ENCODE measurements at regions of chr4 and their contacts with region 1.

Region 1: DNA sequence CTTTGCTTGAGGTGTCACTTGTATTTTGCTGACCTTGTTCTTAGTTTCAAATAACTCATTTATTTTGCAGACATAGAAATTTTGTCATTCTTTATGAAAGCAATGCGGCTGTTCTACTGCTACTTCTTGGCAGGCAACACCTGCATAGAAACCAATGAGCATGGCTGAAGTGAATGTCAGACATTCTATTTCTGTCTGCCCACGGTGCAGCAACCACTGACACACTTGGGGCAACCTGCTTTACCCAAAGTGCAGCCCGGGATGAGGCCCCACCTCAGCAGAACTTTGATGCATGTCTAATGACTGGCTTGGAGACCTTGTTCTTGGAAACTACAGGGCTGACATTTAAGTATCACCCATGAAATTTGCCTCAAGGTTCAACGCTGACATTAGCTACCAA is 93.6 kb downstream of the RBM47 start:
- DNase-seq: no peak
- H3K4me3 ChIP-seq: no peak overlapping the region
- H3K27ac ChIP-seq: no peak overlapping the region
- H3K4me1 ChIP-seq: peaks cover 4% of the 10 kb centered on the region; the same call in 1 of the 2 replicates
- H3K27me3 ChIP-seq: no peaks in the 10 kb centered on the region
- CTCF ChIP-seq: no peak

Region 2: GRCh38 chr4:41339812-41340809 is 804.1 kb after region 1 on chr4:
- CTCF ChIA-PET with region 1: interaction called, 26 read pairs
- POLR2A ChIA-PET with region 1: no interaction called
- intact Hi-C with region 1: no loop called
- DNase-seq: no peak
- H3K4me3 ChIP-seq: no peak overlapping the region
- H3K27ac ChIP-seq: no peak overlapping the region
- H3K4me1 ChIP-seq: peaks cover 5% of the 10 kb centered on the region
- H3K27me3 ChIP-seq: no peaks in the 10 kb centered on the region
- CTCF ChIP-seq: no peak

Measured in PC-9 (cell line).